ENCODE measurements at regions of chrX and their contacts with region 1.

Region 1: DNA sequence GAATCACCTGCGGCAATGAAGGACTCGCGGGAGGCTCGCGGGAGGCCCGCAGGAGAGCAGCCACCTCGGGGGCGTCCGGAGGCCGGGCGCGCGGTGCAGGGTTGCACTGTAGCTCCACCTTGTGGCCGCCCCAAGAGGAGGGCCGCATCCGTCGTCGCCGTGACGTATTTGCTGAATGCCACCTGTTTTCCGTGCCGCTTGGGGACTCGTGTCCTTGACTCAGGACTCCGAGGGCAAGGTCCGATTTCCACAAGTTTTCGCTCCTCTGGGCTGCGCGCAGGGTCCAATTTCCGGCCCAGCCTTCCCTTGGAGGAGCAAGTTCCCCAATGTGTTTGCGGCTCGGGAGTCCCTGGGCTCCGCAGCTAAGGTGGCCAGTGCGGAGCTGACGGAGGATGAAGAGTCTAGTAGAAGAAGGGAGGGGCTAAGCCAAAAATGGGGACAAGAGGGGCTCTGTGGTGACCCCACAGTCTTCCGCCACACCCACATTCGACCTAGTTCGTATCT is 10.7 kb upstream of the DLG3 start:
- DNase-seq: peak; percentile 78
- ATAC-seq: peak; percentile 68
- H3K4me3 Mint-ChIP-seq: peak overlapping the region; percentile 91
- H3K27ac Mint-ChIP-seq: peak overlapping the region; percentile 96
- H3K4me1 Mint-ChIP-seq: peaks cover 16% of the 10 kb centered on the region
- H3K27me3 Mint-ChIP-seq: peaks cover 10% of the 10 kb centered on the region
- CTCF ChIP-seq: peak; percentile 59

Region 2: GRCh38 chrX:70422851-70423341 is 11.0 kb before region 1 on chrX and contains the start of gene GDPD2:
- CTCF ChIA-PET with region 1: interaction called, 94 read pairs
- POLR2A ChIA-PET with region 1: interaction called, 20 read pairs
- DNase-seq: peak; percentile 64
- ATAC-seq: peak; percentile 81
- H3K4me3 Mint-ChIP-seq: peak within 1 kb of the TSS; percentile 76
- H3K27ac Mint-ChIP-seq: peak within 1 kb of the TSS; percentile 77
- H3K4me1 Mint-ChIP-seq: peaks cover 30% of the 10 kb centered on the region
- H3K27me3 Mint-ChIP-seq: no peaks in the 10 kb centered on the region
- CTCF ChIP-seq: no peak
- total RNA-seq, gene GDPD2: 7.0 to 9.3 TPM (median 8.8 TPM) in 3 replicates